B cell (primary cell): ENCODE measurements at regions of chr14 and their contacts with region 1.

Region 1: DNA sequence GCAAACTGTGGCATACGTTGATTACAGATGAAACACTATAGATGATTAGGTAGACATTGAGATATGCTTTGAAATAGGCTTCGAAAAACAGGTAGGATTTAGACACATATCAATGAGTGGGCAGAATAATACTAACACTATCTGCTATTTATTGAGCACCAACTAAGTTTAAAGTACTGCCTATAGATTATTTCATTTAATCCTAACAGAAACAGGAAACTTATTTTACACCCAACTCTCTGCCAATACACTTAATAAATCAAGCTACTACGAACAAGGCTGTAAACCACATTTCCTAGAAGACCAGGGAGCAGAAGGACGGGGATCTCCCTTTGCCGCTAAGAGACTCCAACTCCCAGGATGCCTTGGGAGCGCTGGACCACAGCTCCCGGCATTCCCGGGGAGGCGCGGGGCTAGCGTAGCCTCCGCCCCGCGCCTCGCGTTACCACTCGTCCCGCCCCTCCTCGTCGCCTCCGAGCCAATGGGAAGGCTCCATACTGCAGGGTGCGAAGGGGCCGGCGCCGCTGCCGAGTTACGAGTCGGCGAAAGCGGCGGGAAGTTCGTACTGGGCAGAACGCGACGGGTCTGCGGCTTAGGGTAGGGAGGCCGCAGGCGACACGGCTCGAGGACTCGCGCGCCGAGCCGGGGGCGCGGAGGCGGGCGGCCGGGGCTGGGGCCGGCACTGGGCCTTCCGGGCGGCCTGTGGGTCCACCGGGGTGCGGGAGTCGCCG is at the start of gene VRK1:
- DNase-seq: peak; percentile 95
- ATAC-seq: peak; percentile 99
- H3K4me3 ChIP-seq: peak within 1 kb of the TSS; percentile 62 to 95 (median 80)
- H3K4me3 Mint-ChIP-seq: peak within 1 kb of the TSS; percentile 90
- H3K27ac ChIP-seq: peak within 1 kb of the TSS; percentile 80 to 82
- H3K27ac Mint-ChIP-seq: peak within 1 kb of the TSS; percentile 91
- H3K4me1 ChIP-seq: peaks cover 11% of the 10 kb centered on the region in 2 donors
- H3K4me1 Mint-ChIP-seq: peaks cover 20% of the 10 kb centered on the region
- H3K27me3 ChIP-seq: peaks cover 0 to 9% (median 2%) of the 10 kb centered on the region in 4 experiments
- H3K27me3 Mint-ChIP-seq: peaks cover 11% of the 10 kb centered on the region
- CTCF ChIP-seq: no peak
- total RNA-seq, gene VRK1: 28.2 and 35.3 TPM in 2 replicates

Region 2: GRCh38 chr14:96391293-96392118 is 405.5 kb before region 1 on chr14:
- CTCF ChIA-PET with region 1: no interaction called
- POLR2A ChIA-PET with region 1: no interaction called
- intact Hi-C with region 1: loop called (anchors 1 kb)
- DNase-seq: peak; percentile 98
- ATAC-seq: peak; percentile 94
- H3K4me3 ChIP-seq: peak overlapping the region; percentile 68 to 96 (median 77)
- H3K4me3 Mint-ChIP-seq: peak overlapping the region; percentile 93
- H3K27ac ChIP-seq: peak overlapping the region; percentile 45 to 74
- H3K27ac Mint-ChIP-seq: peak overlapping the region; percentile 79
- H3K4me1 ChIP-seq: peaks cover 7 to 18% of the 10 kb centered on the region in 2 donors
- H3K4me1 Mint-ChIP-seq: peaks cover 8% of the 10 kb centered on the region
- H3K27me3 ChIP-seq: no peaks in the 10 kb centered on the region
- H3K27me3 Mint-ChIP-seq: peaks cover 5% of the 10 kb centered on the region
- CTCF ChIP-seq: no peak

Region 3: GRCh38 chr14:96762650-96763049 is 34.4 kb before region 1 on chr14:
- CTCF ChIA-PET with region 1: no interaction called
- POLR2A ChIA-PET with region 1: interaction called, 3 read pairs
- intact Hi-C with region 1: loop called (anchors 1 kb)
- DNase-seq: peak; percentile 82
- ATAC-seq: peak; percentile 92
- H3K4me3 ChIP-seq: peak overlapping the region in 2 of 5 experiments; percentile 40 to 54
- H3K4me3 Mint-ChIP-seq: peak overlapping the region; percentile 81
- H3K27ac ChIP-seq: no peak overlapping the region
- H3K27ac Mint-ChIP-seq: no peak overlapping the region
- H3K4me1 ChIP-seq: peaks cover 0 to 5% of the 10 kb centered on the region in 2 donors
- H3K4me1 Mint-ChIP-seq: peaks cover 5% of the 10 kb centered on the region
- H3K27me3 ChIP-seq: no peaks in the 10 kb centered on the region
- H3K27me3 Mint-ChIP-seq: peaks cover 9% of the 10 kb centered on the region
- CTCF ChIP-seq: no peak

Region 4: DNA sequence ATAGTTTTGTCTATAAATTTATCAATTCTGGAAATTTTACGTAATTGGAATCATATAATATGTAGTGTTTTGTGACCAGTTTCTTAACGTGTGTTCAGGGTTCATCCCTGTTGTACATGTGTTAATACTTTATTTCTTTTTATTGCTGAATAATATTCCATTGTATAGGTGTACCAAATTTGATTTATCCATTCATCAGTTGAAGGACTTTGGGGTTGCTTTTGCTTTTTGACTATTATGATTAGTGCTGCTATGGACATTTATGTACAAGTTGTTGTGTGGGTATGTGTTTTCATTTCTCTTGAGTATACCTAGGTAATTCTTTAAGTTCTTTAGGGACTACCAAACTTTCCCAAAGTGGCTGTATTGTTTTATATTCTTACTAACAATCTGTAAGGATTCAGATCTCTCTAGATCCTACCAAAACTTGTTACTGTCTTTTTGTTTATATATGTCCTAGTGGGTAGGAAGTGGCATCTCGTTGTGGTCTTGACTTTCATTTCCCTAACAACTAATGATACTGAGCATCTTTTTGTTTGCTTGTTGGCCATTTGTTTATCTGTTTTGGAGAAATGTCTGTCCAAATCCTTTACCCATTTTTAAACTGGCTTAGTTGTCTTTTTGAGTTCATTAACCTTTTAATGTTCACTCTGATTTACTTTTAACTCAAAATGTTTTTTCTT is 15.1 kb after region 1 on chr14:
- CTCF ChIA-PET with region 1: no interaction called
- POLR2A ChIA-PET with region 1: no interaction called
- intact Hi-C with region 1: no loop called
- DNase-seq: peak; percentile 20
- ATAC-seq: no peak
- H3K4me3 ChIP-seq: no peak overlapping the region
- H3K4me3 Mint-ChIP-seq: peak overlapping the region; percentile 13
- H3K27ac ChIP-seq: no peak overlapping the region
- H3K27ac Mint-ChIP-seq: no peak overlapping the region
- H3K4me1 ChIP-seq: peaks cover 6 to 10% of the 10 kb centered on the region in 2 donors
- H3K4me1 Mint-ChIP-seq: peaks cover 34% of the 10 kb centered on the region
- H3K27me3 ChIP-seq: no peaks in the 10 kb centered on the region
- H3K27me3 Mint-ChIP-seq: no peaks in the 10 kb centered on the region
- CTCF ChIP-seq: no peak